Activated CD4-positive, alpha-beta T cell treated with anti-CD3 and anti-CD28 coated beads for 36 hours (primary cell): ENCODE measurements at regions of chr18 and their contacts with region 1.

Region 1: GRCh38 chr18:51110073-51110803 is 80.2 kb downstream of the SMAD4 start:
- DNase-seq: peak; percentile 85
- ATAC-seq: peak; percentile 86
- H3K4me3 Mint-ChIP-seq: no peak overlapping the region
- H3K27ac Mint-ChIP-seq: no peak overlapping the region
- H3K4me1 Mint-ChIP-seq: peaks cover 12% of the 10 kb centered on the region
- H3K27me3 Mint-ChIP-seq: no peaks in the 10 kb centered on the region

Region 2: GRCh38 chr18:51009072-51009471 is 101.2 kb before region 1 on chr18:
- CTCF ChIA-PET with region 1: no interaction called
- POLR2A ChIA-PET with region 1: no interaction called
- intact Hi-C with region 1: no loop called
- DNase-seq: no peak
- ATAC-seq: no peak
- H3K4me3 Mint-ChIP-seq: no peak overlapping the region
- H3K27ac Mint-ChIP-seq: no peak overlapping the region
- H3K4me1 Mint-ChIP-seq: no peaks in the 10 kb centered on the region
- H3K27me3 Mint-ChIP-seq: no peaks in the 10 kb centered on the region

Region 3: GRCh38 chr18:51251625-51252024 is 141.4 kb after region 1 on chr18:
- CTCF ChIA-PET with region 1: no interaction called
- POLR2A ChIA-PET with region 1: no interaction called
- intact Hi-C with region 1: no loop called
- DNase-seq: no peak
- ATAC-seq: no peak
- H3K4me3 Mint-ChIP-seq: no peak overlapping the region
- H3K27ac Mint-ChIP-seq: no peak overlapping the region
- H3K4me1 Mint-ChIP-seq: no peaks in the 10 kb centered on the region
- H3K27me3 Mint-ChIP-seq: peaks cover 4% of the 10 kb centered on the region

Region 4: DNA sequence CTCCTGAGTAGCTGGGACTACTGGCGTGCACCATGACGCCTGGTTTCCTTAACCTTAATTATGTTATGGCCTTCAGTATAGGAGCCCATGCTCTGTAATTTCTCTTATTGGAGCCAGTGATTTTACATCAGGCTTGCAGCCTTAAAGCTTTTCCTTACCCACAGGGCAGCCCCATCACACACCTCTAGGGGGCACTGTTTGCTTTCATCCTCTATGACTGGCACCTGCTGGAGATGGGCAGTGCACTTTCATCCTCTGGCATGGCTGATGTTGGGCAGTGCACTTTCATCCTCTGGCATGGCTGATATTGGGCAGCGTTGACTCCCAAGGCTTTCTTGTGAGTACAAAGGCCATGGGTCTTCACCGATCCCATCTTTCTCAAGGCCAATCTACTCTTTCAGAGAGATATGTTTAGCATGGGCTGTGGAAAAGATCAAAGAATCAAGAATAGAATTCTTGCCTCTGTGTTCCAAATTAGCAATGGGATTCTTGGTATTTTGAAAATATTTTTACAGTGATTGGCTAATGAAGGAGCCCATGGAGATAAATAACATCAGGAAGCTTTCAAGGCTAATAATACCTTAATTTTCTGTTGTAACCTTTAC is 167.9 kb after region 1 on chr18:
- CTCF ChIA-PET with region 1: interaction called, 12 read pairs
- POLR2A ChIA-PET with region 1: no interaction called
- intact Hi-C with region 1: loop called in 1 of 2 experiments (anchors 5 kb)
- DNase-seq: peak; percentile 76
- ATAC-seq: peak; percentile 78
- H3K4me3 Mint-ChIP-seq: no peak overlapping the region
- H3K27ac Mint-ChIP-seq: no peak overlapping the region
- H3K4me1 Mint-ChIP-seq: no peaks in the 10 kb centered on the region
- H3K27me3 Mint-ChIP-seq: peaks cover 7% of the 10 kb centered on the region

Region 5: DNA sequence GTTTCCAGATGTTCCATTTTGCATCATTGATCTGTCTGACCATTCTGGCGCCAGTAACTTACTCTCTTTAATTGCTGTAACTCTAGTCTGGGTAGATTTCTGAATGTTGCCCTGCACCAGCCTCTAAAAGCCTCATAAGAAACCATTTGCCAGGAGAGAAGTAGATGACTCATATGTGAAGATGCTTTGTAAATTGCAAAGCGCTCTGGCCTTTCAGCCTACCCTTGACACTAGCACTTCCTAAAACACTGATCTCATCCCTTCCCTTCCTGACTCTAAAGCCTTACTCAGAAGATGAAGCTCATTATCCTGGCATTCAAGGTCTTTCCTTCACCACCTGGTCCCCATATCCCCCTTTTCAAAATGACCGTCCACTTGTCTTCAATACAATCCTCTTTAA is 280.5 kb after region 1 on chr18:
- CTCF ChIA-PET with region 1: interaction called, 3 read pairs
- POLR2A ChIA-PET with region 1: interaction called, 10 read pairs
- intact Hi-C with region 1: loop called in 1 of 2 experiments (anchors 2 kb)
- DNase-seq: no peak
- ATAC-seq: no peak
- H3K4me3 Mint-ChIP-seq: no peak overlapping the region
- H3K27ac Mint-ChIP-seq: no peak overlapping the region
- H3K4me1 Mint-ChIP-seq: no peaks in the 10 kb centered on the region
- H3K27me3 Mint-ChIP-seq: peaks cover 7% of the 10 kb centered on the region

Region 6: DNA sequence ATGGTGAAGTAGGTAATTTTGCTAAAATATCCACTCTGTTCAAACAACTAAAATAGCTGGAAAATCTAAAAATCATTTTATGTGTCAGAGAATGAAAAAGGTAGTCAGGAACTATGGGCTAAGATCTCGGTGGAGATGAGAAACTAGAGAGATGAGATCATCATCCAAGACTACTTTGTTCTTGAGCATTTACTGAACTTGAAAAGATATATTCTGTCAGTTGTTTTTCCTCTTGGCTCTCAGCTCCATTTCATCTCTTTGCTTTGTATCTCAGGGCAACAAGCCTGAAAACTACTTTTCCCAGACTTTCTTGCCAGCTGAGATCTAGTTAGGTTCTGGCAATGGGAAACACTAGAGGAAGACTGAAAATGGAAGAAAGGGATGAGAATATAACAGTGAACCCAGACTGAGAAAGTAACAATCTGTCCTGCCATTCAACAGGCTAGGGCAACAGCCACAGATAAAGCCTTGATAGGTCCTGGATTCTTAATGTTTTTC is 433.5 kb after region 1 on chr18:
- CTCF ChIA-PET with region 1: no interaction called
- POLR2A ChIA-PET with region 1: no interaction called
- intact Hi-C with region 1: loop called (anchors 10 kb)
- DNase-seq: no peak
- ATAC-seq: no peak
- H3K4me3 Mint-ChIP-seq: no peak overlapping the region
- H3K27ac Mint-ChIP-seq: no peak overlapping the region
- H3K4me1 Mint-ChIP-seq: peaks cover 3% of the 10 kb centered on the region
- H3K27me3 Mint-ChIP-seq: no peaks in the 10 kb centered on the region

Region 7: GRCh38 chr18:52288403-52289004 is 1178.3 kb after region 1 on chr18:
- CTCF ChIA-PET with region 1: interaction called, 3 read pairs
- POLR2A ChIA-PET with region 1: no interaction called
- intact Hi-C with region 1: loop called in 1 of 2 experiments (anchors 5 kb)
- DNase-seq: peak; percentile 58
- ATAC-seq: no peak
- H3K4me3 Mint-ChIP-seq: no peak overlapping the region
- H3K27ac Mint-ChIP-seq: no peak overlapping the region
- H3K4me1 Mint-ChIP-seq: no peaks in the 10 kb centered on the region
- H3K27me3 Mint-ChIP-seq: no peaks in the 10 kb centered on the region